ENCODE measurements at regions of chr7 and their contacts with region 1.

Region 1: DNA sequence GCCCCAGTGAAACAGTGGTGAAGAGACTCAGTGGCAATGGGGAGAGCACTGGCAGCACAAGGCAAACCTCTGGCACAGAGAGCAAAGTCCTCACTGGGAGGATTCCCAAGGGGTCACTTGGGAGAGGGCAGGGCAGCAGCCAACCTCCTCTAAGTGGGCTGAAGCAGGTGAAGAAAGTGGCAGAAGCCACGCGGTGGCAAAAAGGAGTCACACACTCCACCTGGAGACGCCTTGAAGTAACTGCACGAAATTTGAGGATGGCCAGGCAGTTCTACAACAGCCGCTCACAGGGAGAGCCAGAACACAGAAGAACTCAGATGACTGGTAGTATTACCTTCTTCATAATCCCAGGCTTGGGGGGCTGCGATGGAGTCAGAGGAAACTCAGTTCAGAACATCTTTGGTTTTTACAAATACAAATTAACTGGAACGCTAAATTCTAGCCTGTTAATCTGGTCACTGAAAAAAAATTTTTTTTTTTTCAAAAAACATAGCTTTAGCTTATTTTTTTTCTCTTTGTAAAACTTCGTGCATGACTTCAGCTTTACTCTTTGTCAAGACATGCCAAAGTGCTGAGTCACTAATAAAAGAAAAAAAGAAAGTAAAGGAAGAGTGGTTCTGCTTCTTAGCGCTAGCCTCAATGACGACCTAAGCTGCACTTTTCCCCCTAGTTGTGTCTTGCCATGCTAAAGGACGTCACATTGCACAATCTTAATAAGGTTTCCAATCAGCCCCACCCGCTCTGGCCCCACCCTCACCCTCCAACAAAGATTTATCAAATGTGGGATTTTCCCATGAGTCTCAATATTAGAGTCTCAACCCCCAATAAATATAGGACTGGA is 435 bp upstream of the IL6 start:
- DNase-seq: no peak
- H3K4me3 ChIP-seq: peak overlapping the region; percentile 60
- H3K27ac ChIP-seq: peak overlapping the region; percentile 73
- H3K4me1 ChIP-seq: peaks cover 64% of the 10 kb centered on the region
- H3K27me3 ChIP-seq: no peaks in the 10 kb centered on the region
- CTCF ChIP-seq: peak; percentile 61

Region 2: DNA sequence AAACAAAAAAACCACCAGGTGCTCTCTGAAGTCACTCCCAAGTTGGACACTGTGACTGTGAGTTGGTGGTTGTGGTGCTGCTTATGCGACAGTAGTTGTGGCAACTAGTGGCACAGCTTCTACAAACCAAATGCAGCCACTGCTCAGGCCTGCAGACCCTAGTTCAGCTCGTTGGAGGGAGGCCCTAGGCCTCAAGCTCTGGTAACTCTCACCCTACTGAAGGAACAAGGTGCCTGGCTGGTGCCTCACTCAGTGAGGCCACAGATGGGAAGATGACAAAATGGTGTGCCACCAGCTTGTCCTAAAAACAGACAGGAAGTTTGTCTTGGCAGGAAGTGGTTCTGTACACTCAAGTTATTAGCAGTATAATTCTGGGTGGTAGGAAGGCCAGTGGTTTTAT is 324.3 kb before region 1 on chr7:
- intact Hi-C with region 1: no loop called
- DNase-seq: no peak
- H3K4me3 ChIP-seq: no peak overlapping the region
- H3K27ac ChIP-seq: no peak overlapping the region
- H3K4me1 ChIP-seq: no peaks in the 10 kb centered on the region
- H3K27me3 ChIP-seq: no peaks in the 10 kb centered on the region
- CTCF ChIP-seq: no peak

Region 3: DNA sequence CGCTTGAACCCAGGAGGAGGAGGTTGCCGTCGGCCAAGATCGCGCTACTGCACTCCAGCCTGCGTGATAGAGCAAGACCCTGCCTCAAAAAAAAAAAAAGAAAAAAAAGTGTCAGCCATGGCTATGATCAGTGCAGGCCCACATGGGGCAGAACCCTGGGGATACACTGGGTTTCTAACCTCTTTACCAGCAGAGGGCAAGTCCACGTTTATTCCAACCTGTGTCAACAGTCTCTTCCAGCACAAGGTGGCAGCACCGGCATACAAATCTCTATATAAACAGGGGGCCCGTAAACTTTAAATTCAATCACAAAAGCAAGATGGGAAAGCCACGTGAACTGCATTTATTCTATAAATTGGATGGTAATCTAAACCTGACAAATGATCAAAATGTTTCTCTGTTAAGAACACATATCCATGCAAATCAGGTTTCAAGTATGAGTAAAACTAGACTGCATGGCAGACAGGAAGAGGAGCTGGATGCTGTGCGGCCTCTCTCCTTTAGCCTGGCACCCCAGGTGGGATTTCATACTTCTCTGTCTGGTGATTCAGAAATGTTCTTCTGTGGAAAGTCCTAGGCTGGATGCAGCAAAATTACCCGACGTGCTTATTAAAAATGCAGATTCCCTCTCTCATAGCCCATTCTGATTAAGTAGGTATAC is 166.6 kb before region 1 on chr7:
- intact Hi-C with region 1: loop called (anchors 2 kb)
- DNase-seq: peak; percentile 60
- H3K4me3 ChIP-seq: no peak overlapping the region
- H3K27ac ChIP-seq: peak overlapping the region; percentile 82
- H3K4me1 ChIP-seq: peaks cover 48% of the 10 kb centered on the region
- H3K27me3 ChIP-seq: no peaks in the 10 kb centered on the region
- CTCF ChIP-seq: peak; percentile 95